Sciatic nerve (tissue), 2 donors: ENCODE measurements at regions of chr21 and their contacts with region 1.

Region 1: DNA sequence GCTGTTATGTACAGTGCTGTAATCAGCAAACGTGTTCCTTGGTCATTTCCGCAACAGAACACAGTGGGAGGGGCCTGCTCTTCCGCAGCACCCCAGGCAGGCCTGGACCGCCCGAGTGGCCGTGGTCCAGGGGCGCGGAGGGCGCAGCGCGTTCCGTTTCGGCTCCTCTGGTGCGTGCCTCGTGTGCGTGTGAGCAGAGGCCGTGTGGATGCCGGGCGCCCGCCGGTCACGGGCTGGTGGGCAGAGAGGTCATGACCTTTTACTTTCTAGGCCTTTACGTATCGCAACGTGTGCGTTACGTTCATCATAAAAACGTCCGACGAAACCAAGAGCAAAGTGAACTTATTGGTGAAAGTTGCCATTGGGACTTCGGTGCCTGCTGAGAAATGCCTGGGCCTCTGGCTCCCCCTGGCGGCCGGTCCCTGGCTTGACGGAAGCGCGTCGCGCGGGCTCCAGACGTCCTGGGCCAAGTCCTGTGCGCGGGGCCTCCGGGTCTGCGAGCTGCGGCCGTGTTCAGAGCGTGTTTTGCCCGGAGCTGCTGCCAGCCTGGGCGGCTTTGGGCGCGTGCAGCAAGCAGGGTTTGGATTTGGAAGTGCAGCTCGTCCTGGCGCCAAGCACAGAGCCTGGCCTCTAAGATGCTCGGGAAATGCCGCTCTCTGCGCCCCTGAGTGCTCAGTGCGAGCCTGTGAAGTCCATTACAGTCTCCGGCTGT is 34.4 kb downstream of the COL18A1 start:
- DNase-seq: peak; percentile 93
- ATAC-seq: peak; percentile 88

Region 2: GRCh38 chr21:45292399-45293219 is 146.7 kb before region 1 on chr21:
- intact Hi-C with region 1: loop called (anchors 1 kb)
- DNase-seq: peak; percentile 92
- ATAC-seq: peak; percentile 82

Region 3: GRCh38 chr21:45865106-45865832 is 426.0 kb after region 1 on chr21:
- intact Hi-C with region 1: no loop called
- DNase-seq: peak; percentile 28
- ATAC-seq: no peak